ENCODE measurements at regions of chr3 and their contacts with region 1.

Region 1: DNA sequence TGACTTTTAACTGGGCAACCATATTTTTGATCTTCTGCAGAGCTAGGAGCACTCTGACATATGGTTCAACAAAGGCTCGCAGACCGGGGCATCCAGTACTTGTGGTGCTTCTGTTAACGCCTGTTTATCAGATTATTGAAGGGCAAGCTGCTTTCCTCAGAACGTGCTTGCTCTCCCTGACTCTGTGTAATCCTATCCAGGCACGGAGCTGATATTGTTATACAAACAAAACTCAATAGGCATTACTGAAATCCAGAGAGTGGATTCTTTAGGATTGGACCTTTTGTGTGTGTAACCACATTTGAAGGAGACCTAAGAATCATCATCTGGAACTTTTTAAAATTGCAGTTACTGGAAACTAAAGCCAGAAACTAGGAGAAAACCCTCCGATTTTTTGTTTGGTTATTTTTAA is 246.5 kb downstream of the PTPRG start:
- DNase-seq: peak in 1 of 5 donors; percentile 45
- ATAC-seq: peak; percentile 43 to 83 (median 60)
- H3K4me3 ChIP-seq: peak overlapping the region in 1 of 12 donors; percentile 2
- H3K27ac ChIP-seq: peak overlapping the region; percentile 58 to 83 (median 75)
- H3K4me1 ChIP-seq: peaks cover 11 to 100% (median 84%) of the 10 kb centered on the region in 12 donors
- H3K27me3 ChIP-seq: no peaks in the 10 kb centered on the region
- CTCF ChIP-seq: no peak
- POLR2A ChIP-seq: no peak

Region 2: DNA sequence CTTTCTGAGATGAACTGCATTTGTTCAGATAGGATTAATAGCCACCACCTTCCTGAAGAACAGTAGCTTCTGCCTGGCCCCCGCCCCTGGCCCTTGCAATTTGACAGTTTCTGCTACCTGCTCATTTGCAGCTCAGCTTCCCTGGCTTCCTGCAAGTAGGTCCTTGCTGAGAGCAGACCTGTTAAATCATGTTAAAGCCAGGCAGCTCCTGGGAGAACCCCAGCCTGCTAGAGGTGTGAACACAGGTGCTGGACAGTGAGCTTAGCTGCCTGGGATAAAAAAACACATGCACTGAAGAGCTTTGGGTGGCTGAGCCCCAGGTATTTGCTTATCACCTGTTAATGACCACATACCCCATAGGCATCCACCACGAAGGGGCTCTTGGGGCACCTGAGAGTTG is 103.1 kb before region 1 on chr3:
- intact Hi-C with region 1: no loop called
- DNase-seq: no peak
- ATAC-seq: no peak
- H3K4me3 ChIP-seq: no peak overlapping the region
- H3K27ac ChIP-seq: no peak overlapping the region
- H3K4me1 ChIP-seq: peaks cover 0 to 42% (median 8%) of the 10 kb centered on the region in 12 donors
- H3K27me3 ChIP-seq: no peaks in the 10 kb centered on the region
- CTCF ChIP-seq: no peak
- POLR2A ChIP-seq: no peak

Region 3: DNA sequence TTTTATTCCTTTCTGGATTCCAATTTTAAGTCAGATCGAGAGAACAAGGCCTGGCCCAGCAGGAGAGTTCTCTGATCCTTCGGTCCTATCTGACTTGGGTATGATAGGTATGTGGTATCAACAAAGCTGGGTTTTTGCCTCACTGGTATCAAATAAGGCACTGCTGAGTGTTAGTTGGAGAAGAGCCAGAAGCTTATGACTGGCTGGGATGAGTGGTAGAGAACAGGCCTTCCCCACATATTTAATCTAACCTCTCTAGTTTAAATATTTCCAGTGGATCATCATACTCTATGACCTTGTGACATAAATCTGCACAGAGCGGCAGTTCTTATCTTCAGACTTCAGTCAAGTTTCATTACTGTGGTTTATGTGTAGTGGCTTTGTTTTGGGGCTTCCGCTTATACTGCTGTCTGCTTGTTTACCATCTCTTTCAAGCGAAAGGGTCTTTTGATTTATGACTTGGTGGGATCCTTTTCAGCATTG is 82.0 kb before region 1 on chr3:
- intact Hi-C with region 1: loop called in 1 of 10 experiments (anchors 5 kb)
- DNase-seq: peak in 2 of 5 donors; percentile 34 to 37
- ATAC-seq: peak; percentile 79 to 90 (median 85)
- H3K4me3 ChIP-seq: no peak overlapping the region
- H3K27ac ChIP-seq: peak overlapping the region in 11 of 12 donors; percentile 16 to 73 (median 60)
- H3K4me1 ChIP-seq: peaks cover 0 to 59% (median 20%) of the 10 kb centered on the region in 12 donors
- H3K27me3 ChIP-seq: no peaks in the 10 kb centered on the region
- CTCF ChIP-seq: no peak
- POLR2A ChIP-seq: no peak

Region 4: DNA sequence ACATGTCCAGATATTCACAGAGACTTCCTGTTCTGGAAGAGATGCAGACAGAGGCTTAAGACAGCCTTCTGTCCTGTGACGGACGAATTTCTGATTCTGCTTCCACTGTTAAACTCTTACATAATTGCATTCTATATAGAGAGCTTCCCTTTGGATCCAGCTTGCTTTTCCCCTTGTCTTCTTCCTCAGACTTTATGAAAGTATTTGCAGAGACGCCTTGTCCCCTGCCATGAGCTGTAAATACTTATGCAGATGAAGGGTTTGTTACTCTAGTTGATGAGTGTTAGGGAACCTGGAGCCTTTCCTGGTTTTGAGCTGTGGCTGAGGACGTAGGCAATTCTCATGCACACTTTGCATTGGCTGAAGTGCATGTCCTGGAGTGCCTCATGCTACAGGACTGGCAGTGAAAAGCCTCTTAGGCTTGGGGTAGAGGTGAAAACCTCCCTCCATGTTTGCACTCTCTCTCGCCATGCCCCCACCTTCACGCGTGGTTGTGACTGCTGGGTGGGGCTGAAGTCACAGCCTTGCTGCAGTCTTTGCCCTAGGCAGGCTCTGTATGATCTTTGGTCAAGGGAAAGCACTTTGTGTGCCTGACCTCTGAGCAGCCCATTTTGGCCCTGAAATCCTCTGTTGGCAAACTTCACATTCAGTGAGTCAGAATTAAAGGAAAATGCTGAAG is 40.1 kb after region 1 on chr3:
- intact Hi-C with region 1: loop called in 4 of 10 experiments (anchors 5 kb)
- DNase-seq: peak; percentile 38 to 74 (median 71)
- ATAC-seq: peak; percentile 74 to 92 (median 86)
- H3K4me3 ChIP-seq: peak overlapping the region in 8 of 12 donors; percentile 6 to 26 (median 12)
- H3K27ac ChIP-seq: peak overlapping the region; percentile 74 to 93 (median 84)
- H3K4me1 ChIP-seq: peaks cover 16 to 67% (median 47%) of the 10 kb centered on the region in 12 donors
- H3K27me3 ChIP-seq: no peaks in the 10 kb centered on the region
- CTCF ChIP-seq: no peak
- POLR2A ChIP-seq: no peak

Region 5: GRCh38 chr3:61903931-61904657 is 96.2 kb after region 1 on chr3:
- intact Hi-C with region 1: loop called in 1 of 10 experiments (anchors 5 kb)
- DNase-seq: peak in 2 of 5 donors; percentile 34 to 35
- ATAC-seq: peak; percentile 37 to 76 (median 70)
- H3K4me3 ChIP-seq: no peak overlapping the region
- H3K27ac ChIP-seq: peak overlapping the region in 11 of 12 donors; percentile 40 to 73 (median 58)
- H3K4me1 ChIP-seq: peaks cover 0 to 63% (median 34%) of the 10 kb centered on the region in 12 donors
- H3K27me3 ChIP-seq: no peaks in the 10 kb centered on the region
- CTCF ChIP-seq: no peak
- POLR2A ChIP-seq: no peak

Region 6: DNA sequence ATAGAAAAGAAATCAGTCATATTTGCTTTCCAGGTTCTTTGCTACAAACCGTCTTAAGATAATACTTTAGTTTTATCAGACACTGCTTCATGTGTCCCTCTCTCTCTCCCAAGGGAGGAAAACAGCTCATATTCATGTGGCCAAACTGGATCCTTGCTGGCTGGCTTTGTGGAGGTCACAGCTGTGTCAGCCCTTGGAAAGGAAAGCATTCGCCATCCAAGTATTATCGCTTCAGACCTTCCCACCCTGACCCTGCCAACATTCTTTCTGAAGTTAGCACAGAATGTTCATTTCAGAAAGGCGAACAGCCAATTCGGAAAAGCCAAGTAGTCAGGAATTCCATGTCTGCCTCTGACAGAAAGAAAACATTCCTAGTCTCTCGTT is 351.8 kb after region 1 on chr3:
- intact Hi-C with region 1: loop called in 1 of 10 experiments (anchors 5 kb)
- DNase-seq: peak; percentile 65 to 89 (median 83)
- ATAC-seq: peak; percentile 94 to 96 (median 96)
- H3K4me3 ChIP-seq: no peak overlapping the region
- H3K27ac ChIP-seq: peak overlapping the region; percentile 80 to 93 (median 88)
- H3K4me1 ChIP-seq: peaks cover 6 to 75% (median 53%) of the 10 kb centered on the region in 12 donors
- H3K27me3 ChIP-seq: no peaks in the 10 kb centered on the region
- CTCF ChIP-seq: no peak
- POLR2A ChIP-seq: no peak

Measured in heart left ventricle (tissue), 16 donors.